ENCODE measurements at regions of chr9 and their contacts with region 1.

Region 1: DNA sequence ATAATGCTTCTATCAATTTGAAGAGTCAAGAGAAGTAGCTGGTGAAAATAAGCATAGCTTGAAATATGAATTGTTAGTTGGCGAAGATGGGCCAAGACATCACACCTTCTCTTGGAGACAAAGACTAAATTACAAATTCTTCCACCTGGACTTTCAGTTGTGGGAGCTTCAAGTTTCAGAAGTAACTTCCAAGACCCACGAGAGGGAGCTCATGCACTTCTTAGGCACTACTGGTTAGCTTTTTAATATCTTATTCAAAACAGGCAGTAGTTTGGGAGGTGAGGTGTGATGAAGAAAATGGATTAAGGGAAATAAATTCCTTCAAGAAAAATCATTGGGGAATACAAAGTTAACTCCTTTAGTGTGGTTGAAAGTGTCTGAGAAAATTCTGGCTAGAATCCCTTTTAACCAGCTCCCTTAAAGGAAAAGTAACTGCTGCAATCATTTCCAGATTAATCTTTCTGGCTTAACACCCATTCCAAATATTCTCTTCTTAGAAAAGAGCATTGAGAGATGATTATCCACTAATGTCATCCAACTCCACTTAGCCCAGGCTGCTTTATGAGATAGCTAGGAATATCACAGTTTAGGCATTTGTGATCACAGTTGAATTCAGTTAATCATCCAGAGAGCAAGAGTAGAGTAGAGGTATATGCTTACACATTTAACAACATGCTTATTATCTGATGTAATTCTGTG is 139.5 kb upstream of the DMRTA1 start:
- DNase-seq: no peak
- H3K4me3 ChIP-seq: no peak overlapping the region
- H3K27ac ChIP-seq: no peak overlapping the region
- H3K4me1 ChIP-seq: no peaks in the 10 kb centered on the region
- H3K27me3 ChIP-seq: no peaks in the 10 kb centered on the region
- CTCF ChIP-seq: peak in 2 of 3 donors; percentile 37 to 44
- POLR2A ChIP-seq: no peak

Region 2: GRCh38 chr9:21677834-21678233 is 629.3 kb before region 1 on chr9:
- intact Hi-C with region 1: loop called (anchors 10 kb)
- DNase-seq: no peak
- H3K4me3 ChIP-seq: no peak overlapping the region
- H3K27ac ChIP-seq: no peak overlapping the region
- H3K4me1 ChIP-seq: no peaks in the 10 kb centered on the region
- H3K27me3 ChIP-seq: no peaks in the 10 kb centered on the region
- CTCF ChIP-seq: no peak
- POLR2A ChIP-seq: no peak